HCT116 (cell line): ENCODE measurements at regions of chr16 and their contacts with region 1.

Region 1: GRCh38 chr16:81737885-81738786 is 41.0 kb upstream of the PLCG2 start:
- DNase-seq: peak; percentile 79
- ATAC-seq: peak; percentile 96
- H3K4me3 ChIP-seq: peak overlapping the region; percentile 6 to 27; a peak in 2 of 4 replicates
- H3K27ac ChIP-seq: no peak overlapping the region
- H3K4me1 ChIP-seq: peaks cover 3 to 11% of the 10 kb centered on the region in 2 experiments; a peak in 3 of 4 replicates
- H3K27me3 ChIP-seq: no peaks in the 10 kb centered on the region
- CTCF ChIP-seq: peak; percentile 92 to 98 (median 95)
- POLR2A ChIP-seq: no peak
- RAD21 ChIP-seq: peak; percentile 99

Region 2: DNA sequence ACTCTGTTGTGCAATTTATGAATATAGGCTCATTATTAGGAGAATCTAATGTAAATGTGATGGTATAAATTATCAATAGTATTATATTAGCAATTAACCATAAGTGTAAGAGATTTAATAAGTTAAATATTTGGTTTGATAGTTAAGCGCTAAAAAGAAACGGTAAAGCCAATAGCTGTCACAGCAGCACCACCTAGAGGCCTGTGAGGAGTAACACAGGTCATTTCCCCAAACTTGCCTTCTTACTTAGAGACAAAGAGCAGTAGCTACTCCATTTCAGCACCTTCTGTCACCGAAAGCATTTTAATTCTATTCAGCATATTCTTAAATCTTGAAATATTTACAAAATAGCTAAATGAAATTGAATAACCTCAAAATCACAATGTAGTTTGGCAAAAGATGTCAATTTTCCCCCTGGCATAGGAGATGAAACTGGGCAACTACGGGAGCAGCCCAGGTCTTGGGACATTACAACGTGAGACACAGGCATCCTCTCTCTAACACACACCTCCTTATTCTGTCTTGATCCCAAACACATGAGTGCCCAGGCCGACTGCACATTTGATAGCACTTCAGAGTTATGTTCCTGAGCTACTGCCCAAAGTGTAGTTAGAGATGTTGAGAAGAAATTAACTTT is 1211.6 kb before region 1 on chr16:
- CTCF ChIA-PET with region 1: no interaction called
- POLR2A ChIA-PET with region 1: no interaction called
- RAD21 ChIA-PET with region 1: no interaction called
- intact Hi-C with region 1: loop called (anchors 10 kb)
- DNase-seq: peak; percentile 38
- ATAC-seq: peak; percentile 73
- H3K4me3 ChIP-seq: no peak overlapping the region
- H3K27ac ChIP-seq: no peak overlapping the region
- H3K4me1 ChIP-seq: no peaks in the 10 kb centered on the region
- H3K27me3 ChIP-seq: no peaks in the 10 kb centered on the region
- CTCF ChIP-seq: peak; percentile 50 to 86 (median 80); a peak in 5 of 6 replicates
- POLR2A ChIP-seq: no peak
- RAD21 ChIP-seq: peak; percentile 74

Region 3: GRCh38 chr16:80924372-80924978 is 813.7 kb before region 1 on chr16:
- CTCF ChIA-PET with region 1: no interaction called
- POLR2A ChIA-PET with region 1: no interaction called
- RAD21 ChIA-PET with region 1: no interaction called
- intact Hi-C with region 1: loop called (anchors 1 kb)
- DNase-seq: peak; percentile 58
- ATAC-seq: peak; percentile 98
- H3K4me3 ChIP-seq: no peak overlapping the region
- H3K27ac ChIP-seq: no peak overlapping the region
- H3K4me1 ChIP-seq: no peaks in the 10 kb centered on the region
- H3K27me3 ChIP-seq: peaks cover 6% of the 10 kb centered on the region; the same call in 1 of the 2 replicates
- CTCF ChIP-seq: peak; percentile 96 to 97 (median 97)
- POLR2A ChIP-seq: no peak
- RAD21 ChIP-seq: peak; percentile 87

Region 4: DNA sequence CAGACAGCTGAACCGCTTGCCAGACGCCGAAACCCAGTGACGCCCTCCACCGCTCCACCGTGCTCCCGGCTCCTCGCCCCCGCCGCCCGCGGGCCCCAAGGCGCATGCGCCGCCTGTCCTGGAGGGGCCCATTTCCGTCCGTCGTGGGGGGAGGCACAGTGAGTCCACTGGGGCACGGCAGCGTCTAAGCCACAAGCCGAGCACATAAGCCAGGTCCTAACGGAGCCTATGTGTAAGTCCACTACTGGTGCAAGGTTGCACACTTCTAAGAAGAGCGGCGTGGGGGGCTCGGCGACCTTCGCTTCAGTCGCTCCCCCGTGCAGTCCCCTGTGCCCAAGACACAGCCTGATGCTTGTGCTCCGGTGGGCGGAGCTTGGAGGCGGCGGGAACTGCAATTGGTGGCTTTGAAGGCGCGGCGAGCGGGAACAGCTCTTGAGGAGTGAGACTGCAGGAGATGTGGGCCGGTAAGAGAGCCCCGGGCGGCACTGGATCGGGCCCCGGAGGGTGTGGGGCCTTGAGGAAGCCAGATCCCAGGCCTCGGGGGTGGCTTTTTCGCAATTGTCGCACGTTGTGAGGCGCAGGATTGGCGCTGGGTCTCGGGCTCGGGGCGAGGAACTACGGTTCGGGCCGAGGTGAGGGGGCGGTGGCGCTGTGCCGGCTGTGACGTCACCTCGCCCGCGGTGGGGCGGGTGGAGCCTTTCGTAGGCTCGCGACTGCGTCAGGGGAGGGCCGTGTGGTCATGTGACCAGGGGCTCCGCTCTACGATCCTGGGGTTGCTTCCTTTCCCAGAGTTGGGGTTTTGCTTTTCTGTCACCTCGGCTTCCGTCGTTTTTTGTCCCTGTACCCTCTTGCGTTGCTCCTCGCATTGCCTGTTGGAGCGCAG is 731.1 kb before region 1 on chr16 and contains the starts of genes CENPN and CMC2:
- CTCF ChIA-PET with region 1: no interaction called
- POLR2A ChIA-PET with region 1: no interaction called
- RAD21 ChIA-PET with region 1: no interaction called
- intact Hi-C with region 1: loop called (anchors 5 kb)
- DNase-seq: peak; percentile 100
- ATAC-seq: peak; percentile 89
- H3K4me3 ChIP-seq: peak within 1 kb of the TSS; percentile 53 to 93
- H3K27ac ChIP-seq: peak within 1 kb of the TSS; percentile 97
- H3K4me1 ChIP-seq: peaks cover 16 to 26% of the 10 kb centered on the region in 2 experiments
- H3K27me3 ChIP-seq: no peaks in the 10 kb centered on the region
- CTCF ChIP-seq: no peak
- POLR2A ChIP-seq: peak; percentile 92
- RAD21 ChIP-seq: no peak
- total RNA-seq, gene CENPN: 76.7 TPM
- total RNA-seq, gene CMC2: 119 TPM

Region 5: DNA sequence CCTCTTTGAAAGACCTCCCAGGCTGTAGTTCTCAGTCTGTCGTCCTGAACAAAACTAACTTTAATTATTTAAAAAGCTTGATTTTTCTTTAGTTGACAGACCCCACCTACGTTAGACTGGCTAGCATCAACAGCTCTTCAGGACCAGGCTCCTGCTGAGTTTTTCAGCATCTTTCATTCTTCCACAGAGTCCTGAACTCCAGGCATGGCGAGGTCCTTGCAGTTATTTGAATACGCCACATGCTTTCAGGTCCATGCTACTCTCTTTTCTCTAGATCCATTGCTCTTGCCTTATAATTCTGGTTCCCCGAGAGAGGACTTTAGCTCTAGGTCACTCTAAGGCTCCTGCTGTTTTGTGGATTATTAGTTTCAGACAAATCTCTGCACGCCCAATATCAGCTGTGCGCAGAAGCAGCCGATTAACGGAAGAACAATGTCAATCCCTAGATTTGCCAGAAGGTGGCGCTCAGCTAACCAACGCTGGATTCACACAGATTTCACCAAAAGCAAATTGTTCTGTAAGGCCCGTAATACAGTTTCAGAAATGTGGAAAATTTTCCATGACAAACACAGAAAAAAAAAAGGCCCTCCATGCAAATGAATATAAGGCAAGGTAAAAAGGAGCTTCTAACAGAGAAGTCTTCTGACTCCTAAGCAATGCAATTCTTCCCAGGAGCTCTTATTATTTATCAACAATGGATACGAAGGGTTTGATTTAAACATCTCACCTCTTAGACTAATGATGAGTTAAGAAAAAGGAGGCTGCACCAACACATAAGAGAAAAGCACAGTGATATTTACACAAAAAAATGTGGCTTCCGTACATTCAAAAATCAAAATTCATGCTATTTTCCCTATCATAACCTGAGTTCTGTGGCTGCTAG is 533.1 kb before region 1 on chr16:
- CTCF ChIA-PET with region 1: interaction called, 4 read pairs
- POLR2A ChIA-PET with region 1: no interaction called
- RAD21 ChIA-PET with region 1: no interaction called
- intact Hi-C with region 1: loop called (anchors 1 kb)
- DNase-seq: peak; percentile 59
- ATAC-seq: peak; percentile 82
- H3K4me3 ChIP-seq: no peak overlapping the region
- H3K27ac ChIP-seq: no peak overlapping the region
- H3K4me1 ChIP-seq: peaks cover 0 to 5% of the 10 kb centered on the region in 2 experiments; a peak in 1 of 4 replicates
- H3K27me3 ChIP-seq: peaks cover 4% of the 10 kb centered on the region; the same call in 1 of the 2 replicates
- CTCF ChIP-seq: peak; percentile 61 to 91 (median 78)
- POLR2A ChIP-seq: no peak
- RAD21 ChIP-seq: peak; percentile 59

Region 6: GRCh38 chr16:81403616-81404373 is 334.3 kb before region 1 on chr16:
- CTCF ChIA-PET with region 1: interaction called, 4 read pairs
- POLR2A ChIA-PET with region 1: no interaction called
- RAD21 ChIA-PET with region 1: no interaction called
- intact Hi-C with region 1: loop called (anchors 1 kb)
- DNase-seq: peak; percentile 85
- ATAC-seq: peak; percentile 63
- H3K4me3 ChIP-seq: peak overlapping the region; percentile 15 to 30; a peak in 3 of 4 replicates
- H3K27ac ChIP-seq: peak overlapping the region; percentile 63; the same call in 1 of the 2 replicates
- H3K4me1 ChIP-seq: peaks cover 52 to 82% of the 10 kb centered on the region in 2 experiments
- H3K27me3 ChIP-seq: no peaks in the 10 kb centered on the region
- CTCF ChIP-seq: peak in 2 of 3 experiments; percentile 97 to 100; a peak in 4 of 6 replicates
- POLR2A ChIP-seq: no peak
- RAD21 ChIP-seq: no peak